CD8-positive, alpha-beta memory T cell (primary cell): ENCODE measurements at regions of chr6 and their contacts with region 1.

Region 1: GRCh38 chr6:25278914-25279747 is at the start of gene CARMIL1:
- DNase-seq: peak; percentile 35 to 77 (median 51)
- H3K4me3 ChIP-seq: peak within 1 kb of the TSS; percentile 54
- H3K4me3 Mint-ChIP-seq: peak within 1 kb of the TSS; percentile 88 to 96 (median 91)
- H3K27ac ChIP-seq: no peak within 1 kb of the TSS
- H3K27ac Mint-ChIP-seq: peak within 1 kb of the TSS in 7 of 8 donors; percentile 76 to 94 (median 80)
- H3K4me1 ChIP-seq: peaks cover 7% of the 10 kb centered on the region
- H3K4me1 Mint-ChIP-seq: peaks cover 20 to 35% (median 29%) of the 10 kb centered on the region in 3 donors
- H3K27me3 ChIP-seq: no peaks in the 10 kb centered on the region
- H3K27me3 Mint-ChIP-seq: peaks cover 12 to 15% of the 10 kb centered on the region in 2 donors
- total RNA-seq, gene CARMIL1: 1.8 to 2.9 TPM

Region 2: DNA sequence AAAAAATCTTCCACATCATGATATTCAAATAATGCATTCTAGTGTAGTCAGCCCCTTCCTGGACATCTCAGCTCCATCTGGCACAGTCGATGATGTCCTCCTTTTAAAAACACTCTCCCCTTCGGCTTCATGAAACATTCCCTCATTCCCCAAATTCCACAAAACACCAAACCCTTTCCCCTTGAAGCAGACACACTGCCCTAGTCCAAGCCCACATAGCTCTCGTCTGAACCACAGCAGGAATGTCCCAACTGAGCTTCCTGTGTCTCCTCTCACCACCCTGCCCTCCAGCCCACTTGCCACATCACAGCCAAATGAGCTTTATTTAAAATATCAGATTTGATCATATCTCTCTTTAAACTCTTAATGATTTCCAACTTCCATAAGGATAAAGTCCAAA is 106.3 kb before region 1 on chr6:
- CTCF ChIA-PET with region 1: no interaction called
- POLR2A ChIA-PET with region 1: no interaction called
- DNase-seq: no peak
- H3K4me3 ChIP-seq: no peak overlapping the region
- H3K4me3 Mint-ChIP-seq: no peak overlapping the region
- H3K27ac ChIP-seq: no peak overlapping the region
- H3K27ac Mint-ChIP-seq: peak overlapping the region in 2 of 8 donors; percentile 22 to 24
- H3K4me1 ChIP-seq: no peaks in the 10 kb centered on the region
- H3K4me1 Mint-ChIP-seq: no peaks in the 10 kb centered on the region
- H3K27me3 ChIP-seq: no peaks in the 10 kb centered on the region
- H3K27me3 Mint-ChIP-seq: peaks cover 0 to 11% of the 10 kb centered on the region in 2 donors

Region 3: DNA sequence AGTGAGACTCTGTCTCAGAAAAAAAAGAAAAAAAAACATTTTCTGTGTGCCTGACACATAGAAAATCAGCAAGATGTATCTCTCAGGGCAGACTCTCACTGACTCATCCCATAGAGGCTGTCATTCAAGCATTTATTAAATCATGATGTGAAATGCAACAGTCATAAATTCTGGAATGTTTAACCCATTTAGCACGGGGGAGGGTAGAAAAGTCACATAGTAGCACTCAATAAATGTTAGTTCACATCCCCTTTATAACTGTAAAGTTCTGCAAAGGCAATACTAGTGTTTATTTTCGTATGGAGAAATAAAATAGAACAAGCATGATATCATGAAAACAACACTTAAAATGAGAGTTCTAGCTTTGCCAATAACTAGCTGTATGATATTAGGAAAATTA is 15.5 kb before region 1 on chr6:
- CTCF ChIA-PET with region 1: interaction called, 25 read pairs
- POLR2A ChIA-PET with region 1: no interaction called
- DNase-seq: no peak
- H3K4me3 ChIP-seq: no peak overlapping the region
- H3K4me3 Mint-ChIP-seq: no peak overlapping the region
- H3K27ac ChIP-seq: no peak overlapping the region
- H3K27ac Mint-ChIP-seq: no peak overlapping the region
- H3K4me1 ChIP-seq: no peaks in the 10 kb centered on the region
- H3K4me1 Mint-ChIP-seq: peaks cover 0 to 4% (median 3%) of the 10 kb centered on the region in 3 donors
- H3K27me3 ChIP-seq: no peaks in the 10 kb centered on the region
- H3K27me3 Mint-ChIP-seq: peaks cover 0 to 6% of the 10 kb centered on the region in 2 donors

Region 4: DNA sequence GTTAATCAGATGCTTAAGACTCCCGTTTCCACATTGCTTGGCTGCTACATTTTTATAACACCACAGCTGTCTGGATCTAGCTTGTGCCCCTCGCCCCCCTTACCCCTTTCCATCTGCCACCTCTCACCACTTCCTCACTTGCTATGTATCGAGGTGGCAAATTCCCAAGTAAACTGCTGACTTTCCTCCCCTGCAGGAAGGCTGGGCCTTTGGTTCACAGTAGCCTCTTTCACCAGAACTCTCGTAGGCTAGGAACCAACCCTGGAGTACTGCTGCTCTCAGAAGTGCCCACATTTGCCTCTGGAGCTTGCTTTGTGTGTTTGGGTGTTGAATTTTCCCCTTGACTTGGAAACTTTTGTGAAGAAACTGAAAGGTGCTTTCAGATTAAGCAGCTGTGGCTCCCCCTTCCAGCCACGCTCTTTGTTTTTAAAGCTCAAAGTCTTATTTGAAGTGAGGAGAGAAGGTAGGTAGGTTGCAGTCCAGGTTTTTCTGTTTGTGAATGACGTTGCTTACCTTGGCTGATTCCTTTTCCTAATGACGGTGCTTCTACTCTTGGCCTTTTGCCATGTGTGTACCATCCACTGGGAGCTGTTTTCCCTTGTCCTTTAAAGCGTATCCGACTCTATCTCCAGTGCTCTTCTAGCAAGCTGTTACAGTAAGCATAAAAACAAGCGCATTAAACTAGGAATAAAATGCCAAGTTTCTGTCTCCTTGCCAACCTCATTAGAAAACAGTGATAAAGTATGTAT is 90.5 kb after region 1 on chr6:
- CTCF ChIA-PET with region 1: interaction called, 13 read pairs
- POLR2A ChIA-PET with region 1: interaction called, 3 read pairs
- DNase-seq: peak in 1 of 5 donors; percentile 49
- H3K4me3 ChIP-seq: peak overlapping the region; percentile 42
- H3K4me3 Mint-ChIP-seq: peak overlapping the region in 6 of 7 donors; percentile 43 to 74 (median 68)
- H3K27ac ChIP-seq: no peak overlapping the region
- H3K27ac Mint-ChIP-seq: peak overlapping the region in 7 of 8 donors; percentile 6 to 97 (median 56)
- H3K4me1 ChIP-seq: peaks cover 48% of the 10 kb centered on the region
- H3K4me1 Mint-ChIP-seq: peaks cover 47 to 83% (median 70%) of the 10 kb centered on the region in 3 donors
- H3K27me3 ChIP-seq: no peaks in the 10 kb centered on the region
- H3K27me3 Mint-ChIP-seq: no peaks in the 10 kb centered on the region

Region 5: GRCh38 chr6:25490018-25490801 is 211.1 kb after region 1 on chr6:
- CTCF ChIA-PET with region 1: interaction called, 86 read pairs
- POLR2A ChIA-PET with region 1: interaction called, 5 read pairs
- DNase-seq: peak; percentile 23 to 74 (median 41)
- H3K4me3 ChIP-seq: no peak overlapping the region
- H3K4me3 Mint-ChIP-seq: no peak overlapping the region
- H3K27ac ChIP-seq: no peak overlapping the region
- H3K27ac Mint-ChIP-seq: peak overlapping the region in 1 of 8 donors; percentile 55
- H3K4me1 ChIP-seq: no peaks in the 10 kb centered on the region
- H3K4me1 Mint-ChIP-seq: peaks cover 0 to 7% (median 1%) of the 10 kb centered on the region in 3 donors
- H3K27me3 ChIP-seq: no peaks in the 10 kb centered on the region
- H3K27me3 Mint-ChIP-seq: peaks cover 0 to 3% of the 10 kb centered on the region in 2 donors

Region 6: GRCh38 chr6:25556516-25556915 is 277.4 kb after region 1 on chr6:
- CTCF ChIA-PET with region 1: interaction called, 20 read pairs
- POLR2A ChIA-PET with region 1: no interaction called
- DNase-seq: peak; percentile 33 to 78 (median 52)
- H3K4me3 ChIP-seq: no peak overlapping the region
- H3K4me3 Mint-ChIP-seq: no peak overlapping the region
- H3K27ac ChIP-seq: no peak overlapping the region
- H3K27ac Mint-ChIP-seq: no peak overlapping the region
- H3K4me1 ChIP-seq: no peaks in the 10 kb centered on the region
- H3K4me1 Mint-ChIP-seq: peaks cover 0 to 4% (median 3%) of the 10 kb centered on the region in 3 donors
- H3K27me3 ChIP-seq: no peaks in the 10 kb centered on the region
- H3K27me3 Mint-ChIP-seq: peaks cover 0 to 3% of the 10 kb centered on the region in 2 donors